ENCODE measurements at regions of chr22 and their contacts with region 1.

Region 1: GRCh38 chr22:17742527-17742902 is 31.8 kb downstream of the BID start:
- DNase-seq: peak; percentile 51
- H3K4me3 ChIP-seq: no peak overlapping the region
- H3K27ac ChIP-seq: no peak overlapping the region
- H3K4me1 ChIP-seq: peaks cover 12% of the 10 kb centered on the region
- H3K27me3 ChIP-seq: no peaks in the 10 kb centered on the region
- CTCF ChIP-seq: peak; percentile 81 to 89

Region 2: DNA sequence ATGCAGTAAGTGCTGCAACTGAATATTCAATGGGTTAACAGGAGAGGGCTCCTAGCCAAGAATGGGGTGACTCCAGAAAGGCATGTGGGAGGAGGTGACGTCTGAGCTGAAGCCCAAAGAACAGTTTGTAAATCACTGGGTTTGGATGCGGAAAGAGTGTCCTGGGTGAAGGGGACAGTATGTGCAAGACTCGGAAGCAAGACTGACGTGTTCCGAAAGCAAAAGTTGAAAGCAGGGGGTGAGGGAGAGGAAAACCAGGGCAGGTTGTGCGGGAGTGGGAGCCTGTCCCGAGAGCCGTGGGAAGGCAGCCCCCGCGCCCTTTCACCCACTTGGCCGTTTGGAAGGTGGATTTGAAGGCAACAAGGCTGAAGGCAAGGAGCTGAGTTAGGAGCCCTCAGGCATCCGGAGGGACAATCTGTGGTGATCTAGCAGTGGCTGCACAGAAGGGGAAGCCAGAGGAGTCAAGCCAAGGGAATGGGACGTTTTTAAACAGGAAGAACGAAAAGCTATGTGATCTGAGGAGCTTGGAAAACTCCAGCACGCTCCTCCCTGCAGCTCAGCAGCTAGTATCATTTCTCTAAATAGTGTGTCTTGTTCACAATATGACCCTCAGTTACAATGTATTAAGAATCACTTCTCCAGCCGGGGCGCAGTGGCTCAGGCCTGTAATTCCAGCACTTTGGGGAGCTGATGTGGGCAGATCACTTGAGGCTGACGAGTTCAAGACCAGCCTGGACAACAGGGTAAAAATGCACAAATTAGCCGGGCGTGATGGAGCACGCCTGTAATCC is 171.5 kb before region 1 on chr22:
- CTCF ChIA-PET with region 1: no interaction called
- dilution Hi-C with region 1: no loop called
- in situ Hi-C with region 1: loop called in 1 of 2 experiments (anchors 25 kb)
- intact Hi-C with region 1: no loop called
- DNase-seq: peak; percentile 53
- H3K4me3 ChIP-seq: peak overlapping the region in 1 of 3 experiments; percentile 13
- H3K27ac ChIP-seq: peak overlapping the region; percentile 42
- H3K4me1 ChIP-seq: peaks cover 23% of the 10 kb centered on the region
- H3K27me3 ChIP-seq: no peaks in the 10 kb centered on the region
- CTCF ChIP-seq: no peak

Region 3: DNA sequence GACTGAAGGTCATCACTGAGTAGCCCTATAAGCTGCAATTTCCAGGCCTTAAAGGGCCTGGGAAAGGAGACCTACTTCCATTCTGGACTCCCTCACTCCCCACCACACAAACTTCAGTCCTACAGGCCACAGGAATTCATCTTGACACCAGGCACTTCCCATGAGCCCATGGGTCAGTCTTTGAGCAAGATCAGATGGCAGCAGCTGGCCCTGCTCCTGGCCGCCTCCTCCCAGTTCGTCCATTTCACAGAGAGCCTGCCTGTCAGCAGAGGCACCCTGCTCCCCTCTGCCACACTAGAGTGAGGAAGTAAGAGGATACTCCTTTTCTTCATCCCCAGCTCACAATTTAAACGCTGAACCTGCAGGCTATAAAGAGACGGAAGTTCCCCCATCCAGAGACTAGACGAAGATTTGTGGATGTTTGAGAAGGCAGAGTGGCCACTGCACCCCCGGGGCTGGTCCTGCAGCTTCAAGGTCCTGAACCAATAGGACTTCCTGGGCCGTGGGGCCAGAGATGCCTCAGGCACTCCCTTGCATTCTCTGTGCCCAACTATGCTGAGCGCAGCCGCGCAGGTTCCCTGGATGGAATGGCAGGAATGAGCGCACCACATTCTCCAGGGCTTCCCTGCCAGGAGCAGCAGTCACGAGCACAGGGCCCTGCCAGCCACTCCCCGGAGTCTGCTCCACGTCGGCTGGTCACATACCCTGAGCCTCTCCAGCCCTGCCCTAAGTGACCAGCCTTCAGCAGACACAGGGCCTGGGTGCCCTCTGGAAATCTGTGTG is 65.3 kb after region 1 on chr22:
- CTCF ChIA-PET with region 1: no interaction called
- dilution Hi-C with region 1: no loop called
- in situ Hi-C with region 1: no loop called
- intact Hi-C with region 1: no loop called
- DNase-seq: no peak
- H3K4me3 ChIP-seq: no peak overlapping the region
- H3K27ac ChIP-seq: no peak overlapping the region
- H3K4me1 ChIP-seq: peaks cover 16% of the 10 kb centered on the region
- H3K27me3 ChIP-seq: no peaks in the 10 kb centered on the region
- CTCF ChIP-seq: no peak

Region 4: GRCh38 chr22:18119409-18120110 is 377.0 kb after region 1 on chr22:
- CTCF ChIA-PET with region 1: no interaction called
- dilution Hi-C with region 1: no loop called
- in situ Hi-C with region 1: no loop called
- intact Hi-C with region 1: loop called (anchors 10 kb)
- DNase-seq: no peak
- H3K4me3 ChIP-seq: no peak overlapping the region
- H3K27ac ChIP-seq: no peak overlapping the region
- H3K4me1 ChIP-seq: peaks cover 7% of the 10 kb centered on the region
- H3K27me3 ChIP-seq: no peaks in the 10 kb centered on the region
- CTCF ChIP-seq: no peak

Measured in mammary epithelial cell (primary cell).